Naive thymus-derived CD4-positive, alpha-beta T cell (primary cell): ENCODE measurements at regions of chr20 and their contacts with region 1.

Region 1: GRCh38 chr20:17682103-17682888 is at the start of gene RRBP1:
- DNase-seq: peak; percentile 89 to 97 (median 97)
- ATAC-seq: peak; percentile 94
- H3K4me3 ChIP-seq: peak within 1 kb of the TSS; percentile 80
- H3K4me3 Mint-ChIP-seq: peak within 1 kb of the TSS; percentile 86 to 93 (median 90)
- H3K27ac ChIP-seq: peak within 1 kb of the TSS; percentile 74
- H3K27ac Mint-ChIP-seq: peak within 1 kb of the TSS; percentile 71 to 92 (median 86)
- H3K4me1 ChIP-seq: peaks cover 0 to 18% of the 10 kb centered on the region in 2 donors
- H3K4me1 Mint-ChIP-seq: peaks cover 20 to 26% (median 24%) of the 10 kb centered on the region in 7 donors
- H3K27me3 ChIP-seq: peaks cover 0 to 4% of the 10 kb centered on the region in 2 donors
- H3K27me3 Mint-ChIP-seq: peaks cover 22 to 42% (median 33%) of the 10 kb centered on the region in 5 donors
- total RNA-seq, gene RRBP1: 27.8 to 73.9 (median 29.1) TPM

Region 2: DNA sequence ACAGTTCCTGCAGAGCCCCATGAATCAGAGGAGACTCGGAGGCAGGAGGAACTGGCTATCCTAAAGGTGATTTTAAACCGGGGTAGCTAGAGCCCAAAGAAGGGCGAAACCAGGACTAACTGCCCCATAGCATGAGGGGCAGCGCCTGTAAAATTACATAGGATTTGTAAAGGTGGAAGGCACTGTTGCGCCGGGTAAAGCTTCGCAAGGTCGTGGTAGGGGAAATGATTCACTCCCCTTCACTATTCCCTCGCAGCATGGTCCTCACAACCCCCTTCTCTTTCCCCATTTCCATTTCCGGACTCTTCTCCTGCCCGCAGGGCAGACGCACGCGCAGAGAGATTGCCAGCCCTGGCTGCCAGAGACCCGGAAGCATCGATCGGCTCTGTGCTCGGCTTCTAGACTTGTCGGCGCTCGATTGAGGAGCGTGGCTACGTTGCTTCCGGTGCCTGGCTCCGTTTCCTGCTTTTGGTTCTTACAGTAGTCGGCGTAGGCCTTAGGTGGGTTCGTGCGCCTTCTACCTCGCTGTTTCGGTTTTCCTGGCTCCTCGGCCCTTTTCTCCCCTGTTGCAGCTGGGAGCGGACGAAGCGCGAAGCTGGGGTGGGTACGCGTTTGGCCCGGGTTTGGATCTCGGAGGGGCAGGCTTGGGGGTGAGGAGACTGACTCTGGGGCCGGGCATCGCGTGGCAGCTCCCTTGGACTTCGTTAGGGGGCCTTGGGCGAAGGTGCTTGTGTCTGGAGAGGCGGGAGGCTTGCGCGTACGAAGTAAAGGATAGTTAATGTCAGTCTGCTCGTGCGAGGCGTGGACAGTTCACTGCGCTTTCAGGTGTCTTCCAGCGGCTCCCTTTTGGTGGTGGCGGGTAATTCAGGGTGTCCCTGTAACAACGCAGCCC is 952.5 kb before region 1 on chr20 and contains the start of gene SNRPB2:
- CTCF ChIA-PET with region 1: no interaction called
- POLR2A ChIA-PET with region 1: no interaction called
- intact Hi-C with region 1: loop called (anchors 1 to 5 kb)
- DNase-seq: peak; percentile 75 to 94 (median 90)
- ATAC-seq: peak; percentile 98
- H3K4me3 ChIP-seq: peak within 1 kb of the TSS; percentile 93
- H3K4me3 Mint-ChIP-seq: peak within 1 kb of the TSS; percentile 87 to 100 (median 99)
- H3K27ac ChIP-seq: peak within 1 kb of the TSS; percentile 94
- H3K27ac Mint-ChIP-seq: peak within 1 kb of the TSS; percentile 98 to 100 (median 100)
- H3K4me1 ChIP-seq: peaks cover 30 to 40% of the 10 kb centered on the region in 2 donors
- H3K4me1 Mint-ChIP-seq: peaks cover 32 to 60% (median 56%) of the 10 kb centered on the region in 7 donors
- H3K27me3 ChIP-seq: no peaks in the 10 kb centered on the region
- H3K27me3 Mint-ChIP-seq: peaks cover 9 to 25% (median 15%) of the 10 kb centered on the region in 5 donors
- total RNA-seq, gene SNRPB2: 30.8 to 97.0 (median 40.0) TPM

Region 3: GRCh38 chr20:17536944-17537444 is 145.3 kb before region 1 on chr20:
- CTCF ChIA-PET with region 1: no interaction called
- POLR2A ChIA-PET with region 1: no interaction called
- intact Hi-C with region 1: loop called in 1 of 2 experiments (anchors 10 kb)
- DNase-seq: peak; percentile 22 to 73 (median 65)
- ATAC-seq: peak; percentile 98
- H3K4me3 ChIP-seq: no peak overlapping the region
- H3K4me3 Mint-ChIP-seq: no peak overlapping the region
- H3K27ac ChIP-seq: no peak overlapping the region
- H3K27ac Mint-ChIP-seq: peak overlapping the region in 2 of 9 donors; percentile 50 to 52
- H3K4me1 ChIP-seq: peaks cover 0 to under 1% of the 10 kb centered on the region in 2 donors
- H3K4me1 Mint-ChIP-seq: peaks cover 0 to 39% (median 0%) of the 10 kb centered on the region in 7 donors
- H3K27me3 ChIP-seq: no peaks in the 10 kb centered on the region
- H3K27me3 Mint-ChIP-seq: peaks cover 10 to 30% (median 18%) of the 10 kb centered on the region in 5 donors

Region 4: GRCh38 chr20:17666481-17666880 is 15.8 kb before region 1 on chr20:
- CTCF ChIA-PET with region 1: no interaction called
- POLR2A ChIA-PET with region 1: no interaction called
- intact Hi-C with region 1: loop called in 1 of 2 experiments (anchors 2 kb)
- DNase-seq: no peak
- ATAC-seq: no peak
- H3K4me3 ChIP-seq: no peak overlapping the region
- H3K4me3 Mint-ChIP-seq: peak overlapping the region in 1 of 10 donors; percentile 14
- H3K27ac ChIP-seq: no peak overlapping the region
- H3K27ac Mint-ChIP-seq: no peak overlapping the region
- H3K4me1 ChIP-seq: no peaks in the 10 kb centered on the region
- H3K4me1 Mint-ChIP-seq: peaks cover 13 to 77% (median 33%) of the 10 kb centered on the region in 7 donors
- H3K27me3 ChIP-seq: no peaks in the 10 kb centered on the region
- H3K27me3 Mint-ChIP-seq: no peaks in the 10 kb centered on the region

Region 5: DNA sequence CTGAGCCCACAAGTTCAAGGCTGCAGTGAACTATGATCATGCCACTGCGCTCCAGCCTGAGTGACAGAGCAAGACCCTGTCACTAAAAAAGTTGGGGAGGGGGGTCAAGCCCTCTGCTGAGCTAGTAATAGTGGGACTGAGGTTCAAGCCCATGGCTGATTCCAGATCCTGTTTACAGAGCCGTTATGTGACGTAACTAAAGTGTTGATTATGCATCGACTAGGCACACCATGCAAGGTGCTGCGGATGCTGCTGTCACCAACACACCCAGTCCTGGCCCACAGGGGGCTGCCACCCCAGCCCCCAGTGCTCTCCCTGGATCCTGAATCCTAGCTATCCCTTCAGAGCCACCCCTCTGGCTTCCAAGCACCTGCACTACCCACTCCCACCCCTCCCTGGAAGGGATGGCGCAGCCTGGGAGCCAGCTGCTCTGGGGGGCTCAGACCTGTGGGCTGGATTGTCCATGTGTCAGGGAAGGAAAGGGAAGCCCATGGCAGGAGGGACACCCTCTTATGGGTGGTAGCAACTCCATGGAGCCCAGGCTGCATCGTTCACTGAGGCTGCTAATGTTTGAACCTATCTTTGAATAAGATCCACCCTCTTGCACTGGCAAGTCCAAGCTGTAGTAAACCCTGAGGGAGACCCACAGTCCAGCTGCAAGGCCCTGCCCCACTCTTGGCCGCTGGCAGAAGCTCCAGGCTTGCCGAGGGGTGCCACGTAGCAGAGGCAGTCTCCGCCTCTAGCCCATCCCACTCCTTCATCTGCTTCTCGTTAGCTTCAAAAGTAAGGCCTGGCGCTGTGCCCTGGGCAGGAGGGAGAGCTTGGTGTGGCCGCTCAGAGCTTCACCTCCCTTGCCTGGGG is 191.3 kb after region 1 on chr20:
- CTCF ChIA-PET with region 1: no interaction called
- POLR2A ChIA-PET with region 1: no interaction called
- intact Hi-C with region 1: no loop called
- DNase-seq: no peak
- ATAC-seq: peak; percentile 29
- H3K4me3 ChIP-seq: no peak overlapping the region
- H3K4me3 Mint-ChIP-seq: no peak overlapping the region
- H3K27ac ChIP-seq: no peak overlapping the region
- H3K27ac Mint-ChIP-seq: no peak overlapping the region
- H3K4me1 ChIP-seq: no peaks in the 10 kb centered on the region
- H3K4me1 Mint-ChIP-seq: peaks cover 4 to 24% (median 18%) of the 10 kb centered on the region in 7 donors
- H3K27me3 ChIP-seq: no peaks in the 10 kb centered on the region
- H3K27me3 Mint-ChIP-seq: peaks cover 5 to 59% (median 18%) of the 10 kb centered on the region in 5 donors

Region 6: DNA sequence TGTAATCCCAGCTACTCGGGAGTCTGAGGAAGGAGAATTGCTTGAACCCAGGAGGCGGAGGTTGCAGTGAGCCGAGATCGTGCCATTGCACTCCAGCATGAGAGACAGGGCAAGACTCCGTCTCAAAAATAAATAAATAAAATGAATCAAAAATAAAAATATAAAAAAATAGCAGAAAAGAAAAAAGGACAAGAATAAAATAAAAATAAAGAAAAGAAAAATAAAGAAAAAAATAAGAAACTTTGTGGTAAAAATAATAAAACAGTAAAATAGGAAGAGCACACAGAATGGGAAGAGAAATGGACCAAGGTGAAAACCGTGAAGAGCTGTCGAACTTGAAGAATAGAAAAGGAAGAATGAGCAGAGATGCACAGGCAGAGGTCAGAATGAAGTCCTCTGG is 223.2 kb after region 1 on chr20:
- CTCF ChIA-PET with region 1: no interaction called
- POLR2A ChIA-PET with region 1: no interaction called
- intact Hi-C with region 1: no loop called
- DNase-seq: no peak
- ATAC-seq: no peak
- H3K4me3 ChIP-seq: no peak overlapping the region
- H3K4me3 Mint-ChIP-seq: no peak overlapping the region
- H3K27ac ChIP-seq: no peak overlapping the region
- H3K27ac Mint-ChIP-seq: no peak overlapping the region
- H3K4me1 ChIP-seq: no peaks in the 10 kb centered on the region
- H3K4me1 Mint-ChIP-seq: peaks cover 0 to 8% (median 0%) of the 10 kb centered on the region in 7 donors
- H3K27me3 ChIP-seq: no peaks in the 10 kb centered on the region
- H3K27me3 Mint-ChIP-seq: peaks cover 0 to 11% (median 6%) of the 10 kb centered on the region in 5 donors

Region 7: GRCh38 chr20:17968366-17969279 is 286.3 kb after region 1 on chr20 and contains the starts of genes MGME1 and SNX5:
- CTCF ChIA-PET with region 1: interaction called, 5 read pairs
- POLR2A ChIA-PET with region 1: interaction called, 16 read pairs
- intact Hi-C with region 1: loop called (anchors 1 kb)
- DNase-seq: peak; percentile 98 to 99 (median 99)
- ATAC-seq: peak; percentile 95
- H3K4me3 ChIP-seq: peak within 1 kb of the TSS; percentile 91
- H3K4me3 Mint-ChIP-seq: peak within 1 kb of the TSS; percentile 89 to 97 (median 94)
- H3K27ac ChIP-seq: peak within 1 kb of the TSS; percentile 96
- H3K27ac Mint-ChIP-seq: peak within 1 kb of the TSS; percentile 93 to 98 (median 97)
- H3K4me1 ChIP-seq: peaks cover 53 to 59% of the 10 kb centered on the region in 2 donors
- H3K4me1 Mint-ChIP-seq: peaks cover 54 to 76% (median 71%) of the 10 kb centered on the region in 7 donors
- H3K27me3 ChIP-seq: no peaks in the 10 kb centered on the region
- H3K27me3 Mint-ChIP-seq: no peaks in the 10 kb centered on the region
- total RNA-seq, gene MGME1: 4.9 to 41.0 (median 13.1) TPM
- total RNA-seq, gene SNX5: 41.4 to 148 (median 61.9) TPM

Region 8: DNA sequence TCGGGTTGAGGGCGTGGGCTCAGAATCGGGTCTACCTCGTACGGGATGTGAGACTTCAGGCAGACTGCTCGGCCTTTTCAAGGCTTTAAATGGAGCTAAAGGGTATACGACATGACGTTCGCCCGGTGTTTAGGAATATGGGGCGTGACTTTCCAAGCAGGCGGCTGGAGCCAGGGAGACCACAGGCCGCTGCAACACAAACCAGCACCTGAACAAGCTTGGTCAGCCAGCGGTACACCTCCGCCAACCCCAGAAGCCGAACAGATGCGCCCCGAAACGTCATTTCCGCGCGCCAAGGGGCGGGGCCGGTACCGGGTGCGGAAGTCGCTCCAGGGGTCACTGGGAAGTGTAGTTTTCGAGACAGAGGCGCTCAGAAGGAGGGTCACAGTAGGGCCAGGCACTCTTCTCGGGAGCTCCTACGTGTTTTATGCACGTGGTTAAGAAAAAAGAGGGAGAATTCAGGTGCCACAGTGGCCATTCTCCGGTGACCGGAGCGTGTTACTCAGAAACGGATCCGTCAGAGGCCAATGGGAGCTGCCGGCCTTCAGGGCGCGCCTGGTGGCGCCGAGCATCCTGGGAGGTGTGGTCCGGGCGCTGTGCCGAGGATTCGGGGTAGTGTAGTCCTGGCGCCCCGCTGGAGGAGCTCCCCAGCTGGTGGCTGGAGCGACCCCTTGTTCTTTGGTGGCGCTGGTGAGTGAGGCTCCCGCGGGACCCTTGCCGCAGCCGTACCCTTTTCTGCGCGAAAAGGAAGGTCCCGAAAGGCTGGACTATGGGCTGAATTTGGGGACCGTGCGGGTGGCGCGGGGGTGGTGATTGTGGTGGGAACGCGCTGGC is 605.8 kb after region 1 on chr20 and contains the start of gene ZNF133:
- CTCF ChIA-PET with region 1: interaction called, 6 read pairs
- POLR2A ChIA-PET with region 1: interaction called, 4 read pairs
- intact Hi-C with region 1: loop called (anchors 1 kb)
- DNase-seq: peak; percentile 96 to 100 (median 98)
- ATAC-seq: peak; percentile 96
- H3K4me3 ChIP-seq: peak within 1 kb of the TSS; percentile 91
- H3K4me3 Mint-ChIP-seq: peak within 1 kb of the TSS; percentile 93 to 99 (median 98)
- H3K27ac ChIP-seq: peak within 1 kb of the TSS; percentile 96
- H3K27ac Mint-ChIP-seq: peak within 1 kb of the TSS; percentile 98 to 100 (median 99)
- H3K4me1 ChIP-seq: peaks cover 4 to 10% of the 10 kb centered on the region in 2 donors
- H3K4me1 Mint-ChIP-seq: peaks cover 16 to 51% (median 35%) of the 10 kb centered on the region in 7 donors
- H3K27me3 ChIP-seq: peaks cover 0 to 7% of the 10 kb centered on the region in 2 donors
- H3K27me3 Mint-ChIP-seq: peaks cover 14 to 30% (median 20%) of the 10 kb centered on the region in 5 donors
- total RNA-seq, gene ZNF133: 6.5 to 11.5 (median 9.4) TPM

Region 9: DNA sequence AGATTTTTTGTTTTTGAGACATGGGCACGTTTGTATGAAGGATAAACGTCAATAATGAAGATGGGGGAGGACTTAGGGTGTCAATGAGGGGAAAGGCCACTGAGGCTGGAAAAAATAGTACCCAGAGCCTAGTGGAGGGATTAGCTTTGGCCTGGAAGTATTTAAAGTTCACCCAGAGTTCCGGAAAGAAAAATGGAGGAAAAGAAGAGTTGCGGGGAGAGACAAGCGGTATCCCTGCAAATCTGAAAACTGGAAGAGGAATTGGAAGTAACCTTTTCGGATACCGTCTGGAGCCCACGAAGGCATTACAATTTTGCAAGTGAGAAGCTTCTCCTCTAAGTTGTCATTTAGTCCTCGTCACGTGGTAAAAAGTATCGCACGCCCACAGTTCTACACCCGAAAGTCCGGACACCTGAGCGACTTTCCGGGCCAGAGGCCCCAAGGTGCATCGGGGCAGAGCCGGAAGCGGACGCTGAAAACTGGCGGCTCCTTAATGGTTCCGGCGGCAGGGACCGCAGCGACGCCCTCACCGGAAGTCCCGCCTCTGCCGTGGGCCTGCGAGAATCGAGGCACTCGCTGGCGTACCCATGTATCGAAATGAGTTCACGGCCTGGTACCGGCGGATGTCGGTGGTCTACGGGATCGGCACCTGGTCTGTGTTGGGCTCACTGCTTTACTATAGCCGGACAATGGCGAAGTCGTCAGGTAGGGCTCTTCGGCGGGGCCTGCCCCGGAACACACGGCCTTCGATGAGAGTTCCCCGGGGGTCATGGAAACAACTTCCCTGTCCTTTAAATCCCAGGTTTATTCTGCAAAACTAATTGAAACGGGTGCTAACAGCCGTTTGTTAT is 884.8 kb after region 1 on chr20 and contains the start of gene SMIM26:
- CTCF ChIA-PET with region 1: no interaction called
- POLR2A ChIA-PET with region 1: interaction called, 3 read pairs
- intact Hi-C with region 1: loop called in 1 of 2 experiments (anchors 2 kb)
- DNase-seq: peak; percentile 85 to 94 (median 92)
- ATAC-seq: peak; percentile 99
- H3K4me3 ChIP-seq: peak within 1 kb of the TSS; percentile 76
- H3K4me3 Mint-ChIP-seq: peak within 1 kb of the TSS; percentile 93 to 99 (median 96)
- H3K27ac ChIP-seq: peak within 1 kb of the TSS; percentile 95
- H3K27ac Mint-ChIP-seq: peak within 1 kb of the TSS; percentile 92 to 100 (median 99)
- H3K4me1 ChIP-seq: peaks cover 4 to 15% of the 10 kb centered on the region in 2 donors
- H3K4me1 Mint-ChIP-seq: peaks cover 14 to 25% (median 22%) of the 10 kb centered on the region in 7 donors
- H3K27me3 ChIP-seq: no peaks in the 10 kb centered on the region
- H3K27me3 Mint-ChIP-seq: no peaks in the 10 kb centered on the region
- total RNA-seq, gene SMIM26: 51.2 to 78.4 (median 69.5) TPM